CD4-positive, alpha-beta T cell (primary cell): ENCODE measurements at regions of chr1 and their contacts with region 1.

Region 1: DNA sequence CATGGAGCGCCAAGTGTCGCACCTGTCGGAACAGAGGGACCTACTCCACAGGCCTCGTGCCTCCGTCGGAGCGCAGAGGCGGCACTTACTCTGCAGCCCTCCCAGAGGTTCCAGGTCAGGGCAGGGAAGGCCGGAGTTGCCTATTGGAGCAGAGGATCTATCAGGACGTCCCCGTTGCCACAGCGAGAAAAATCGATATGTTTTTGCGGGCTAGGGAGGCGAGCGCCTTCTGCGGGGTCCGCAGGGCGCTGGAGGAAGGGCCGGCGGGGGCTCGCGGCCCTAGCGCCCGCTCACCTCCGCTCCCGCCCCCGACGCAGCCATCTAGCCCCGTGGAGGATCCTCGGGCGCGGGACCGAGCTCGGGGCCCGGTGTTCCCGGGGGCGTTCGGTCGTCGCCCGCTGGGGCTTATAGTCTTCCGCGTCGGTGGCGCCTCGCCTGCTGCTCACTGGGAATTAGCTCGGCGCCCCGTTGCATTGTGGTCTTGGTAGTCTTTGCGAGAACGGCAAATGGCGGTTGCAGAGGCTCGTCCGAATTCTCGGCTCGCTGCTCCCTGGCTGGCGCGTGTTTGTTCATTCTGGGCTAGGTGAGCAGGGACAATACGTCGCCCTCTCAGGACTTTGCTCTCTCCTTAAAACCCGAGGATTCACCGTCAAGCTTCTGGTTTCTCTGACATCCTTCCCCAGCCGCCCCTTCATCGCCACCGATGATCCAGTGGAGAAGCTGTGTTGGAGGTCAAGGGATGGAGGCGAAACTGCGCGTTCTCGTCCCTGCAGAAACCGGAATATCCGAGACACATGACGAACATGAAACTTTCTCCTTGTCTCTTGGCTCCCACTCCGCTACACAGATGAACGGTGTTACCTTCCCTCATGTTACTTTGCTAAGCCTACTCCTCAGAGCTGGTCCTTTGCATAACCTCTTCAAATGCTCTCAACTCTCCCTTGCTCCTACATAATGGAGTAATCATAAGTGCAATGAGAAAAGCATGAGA is at the start of gene JTB:
- DNase-seq: peak; percentile 68 to 91 (median 82)
- ATAC-seq: peak; percentile 96
- H3K4me3 ChIP-seq: peak within 1 kb of the TSS; percentile 82
- H3K4me3 Mint-ChIP-seq: peak within 1 kb of the TSS; percentile 98
- H3K27ac ChIP-seq: peak within 1 kb of the TSS; percentile 80 to 83
- H3K27ac Mint-ChIP-seq: peak within 1 kb of the TSS; percentile 94
- H3K4me1 ChIP-seq: peaks cover 31% of the 10 kb centered on the region
- H3K4me1 Mint-ChIP-seq: peaks cover 42% of the 10 kb centered on the region
- H3K27me3 ChIP-seq: no peaks in the 10 kb centered on the region
- H3K27me3 Mint-ChIP-seq: no peaks in the 10 kb centered on the region
- CTCF ChIP-seq: no peak
- total RNA-seq, gene JTB: 80.4 to 80.9 TPM

Region 2: GRCh38 chr1:153958111-153958960 is 19.2 kb before region 1 on chr1 and contains the start of gene CRTC2:
- CTCF ChIA-PET with region 1: interaction called, 10 read pairs
- POLR2A ChIA-PET with region 1: interaction called, 52 read pairs
- intact Hi-C with region 1: loop called (anchors 1 kb)
- DNase-seq: peak; percentile 93 to 99 (median 97)
- ATAC-seq: peak; percentile 88
- H3K4me3 ChIP-seq: peak within 1 kb of the TSS; percentile 75
- H3K4me3 Mint-ChIP-seq: peak within 1 kb of the TSS; percentile 94
- H3K27ac ChIP-seq: peak within 1 kb of the TSS; percentile 89 to 91
- H3K27ac Mint-ChIP-seq: peak within 1 kb of the TSS; percentile 89
- H3K4me1 ChIP-seq: peaks cover 65% of the 10 kb centered on the region
- H3K4me1 Mint-ChIP-seq: peaks cover 68% of the 10 kb centered on the region
- H3K27me3 ChIP-seq: no peaks in the 10 kb centered on the region
- H3K27me3 Mint-ChIP-seq: no peaks in the 10 kb centered on the region
- CTCF ChIP-seq: no peak
- total RNA-seq, gene CRTC2: 147 to 152 TPM

Region 3: GRCh38 chr1:153967082-153968000 is 10.2 kb before region 1 on chr1 and contains the start of gene CREB3L4:
- CTCF ChIA-PET with region 1: interaction called, 21 read pairs
- POLR2A ChIA-PET with region 1: interaction called, 149 read pairs
- intact Hi-C with region 1: loop called in 1 of 2 experiments (anchors 1 kb)
- DNase-seq: peak; percentile 64 to 95 (median 80)
- ATAC-seq: peak; percentile 87
- H3K4me3 ChIP-seq: peak within 1 kb of the TSS; percentile 75
- H3K4me3 Mint-ChIP-seq: peak within 1 kb of the TSS; percentile 96
- H3K27ac ChIP-seq: peak within 1 kb of the TSS; percentile 82 to 83
- H3K27ac Mint-ChIP-seq: peak within 1 kb of the TSS; percentile 94
- H3K4me1 ChIP-seq: peaks cover 60% of the 10 kb centered on the region
- H3K4me1 Mint-ChIP-seq: peaks cover 58% of the 10 kb centered on the region
- H3K27me3 ChIP-seq: no peaks in the 10 kb centered on the region
- H3K27me3 Mint-ChIP-seq: no peaks in the 10 kb centered on the region
- CTCF ChIP-seq: peak; percentile 32
- total RNA-seq, gene CREB3L4: 2.9 to 3.9 TPM